Activated T-helper 1 cell treated with anti-CD3 and anti-CD28 coated beads, Interleukin-12 subunit alpha, Interleukin-12 subunit beta, Interleukin-2, Interleukin-4 antibody, amounts not matched to agents 30 ng/mL and 10 ng/mL and 1 ng/mL, durations not matched to agents 14 hours and 24 hours and 36 hours (primary cell): ENCODE measurements at regions of chr6 and their contacts with region 1.

Region 1: DNA sequence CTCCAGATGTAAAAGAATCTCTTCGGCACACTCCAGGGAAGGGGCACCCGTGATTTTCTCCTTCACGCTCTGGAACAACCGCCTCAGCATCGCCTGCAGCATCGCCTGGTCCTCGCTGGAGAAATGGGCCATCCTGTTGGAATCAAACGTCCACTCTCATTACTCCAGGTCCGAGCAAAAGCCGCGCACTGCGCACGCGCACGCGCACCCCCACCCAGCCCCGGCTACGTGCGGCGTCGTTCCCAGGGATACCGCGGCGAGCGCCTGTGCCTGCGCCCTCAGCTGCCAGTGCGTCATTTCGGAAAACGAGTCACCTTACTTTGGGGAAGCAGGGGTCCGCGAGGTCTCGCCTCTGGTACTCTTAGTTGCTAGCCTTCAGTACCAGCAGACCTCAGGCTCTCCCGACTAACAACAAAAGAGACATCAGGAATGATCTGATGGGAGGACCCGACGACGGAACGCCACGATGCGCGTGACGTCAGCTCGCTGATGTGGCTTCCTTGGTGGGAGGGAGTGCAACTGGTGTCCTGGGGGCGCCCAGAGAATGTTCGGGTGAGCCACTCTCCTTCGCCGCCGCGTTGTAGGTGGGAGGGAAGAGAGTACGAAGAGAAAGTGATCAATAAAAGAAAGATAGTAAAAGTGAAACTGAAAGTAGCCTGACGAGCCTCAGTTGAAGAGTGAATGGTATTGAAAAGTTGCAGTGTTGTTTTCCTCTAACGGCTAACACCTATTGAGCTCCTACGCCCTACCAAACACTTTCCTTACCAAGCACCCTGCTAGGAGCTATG is at the start of gene TBC1D32:
- DNase-seq: peak; percentile 83
- H3K4me3 Mint-ChIP-seq: peak within 1 kb of the TSS; percentile 95
- H3K27ac Mint-ChIP-seq: peak within 1 kb of the TSS; percentile 99
- H3K4me1 Mint-ChIP-seq: peaks cover 31% of the 10 kb centered on the region
- H3K27me3 Mint-ChIP-seq: peaks cover 3% of the 10 kb centered on the region
- total RNA-seq, gene TBC1D32: 6.8 and 7.9 TPM in 2 replicates

Region 2: DNA sequence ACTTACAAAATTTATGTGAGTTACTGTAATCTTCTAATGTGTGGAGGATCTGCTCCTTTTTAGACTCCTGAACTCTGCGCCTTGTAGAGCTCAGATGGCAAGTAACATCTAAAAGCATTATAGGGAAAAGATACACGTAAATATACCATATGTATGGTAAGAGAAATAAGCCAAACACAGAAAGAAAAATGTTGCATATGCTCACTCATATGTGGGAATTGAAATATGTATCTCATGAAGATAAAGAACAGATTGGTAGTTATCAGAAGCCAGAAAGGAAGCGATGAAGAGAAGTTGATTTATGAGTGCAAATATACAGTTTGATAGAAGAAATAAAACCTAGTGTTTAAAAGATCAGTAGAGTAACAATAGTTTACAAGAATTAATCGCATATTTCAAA is 1170.0 kb before region 1 on chr6:
- intact Hi-C with region 1: no loop called
- DNase-seq: no peak
- H3K4me3 Mint-ChIP-seq: no peak overlapping the region
- H3K27ac Mint-ChIP-seq: no peak overlapping the region
- H3K4me1 Mint-ChIP-seq: no peaks in the 10 kb centered on the region
- H3K27me3 Mint-ChIP-seq: no peaks in the 10 kb centered on the region

Region 3: GRCh38 chr6:121247386-121247785 is 87.1 kb before region 1 on chr6:
- intact Hi-C with region 1: loop called (anchors 1 kb)
- DNase-seq: no peak
- H3K4me3 Mint-ChIP-seq: no peak overlapping the region
- H3K27ac Mint-ChIP-seq: peak overlapping the region; percentile 21
- H3K4me1 Mint-ChIP-seq: peaks cover 15% of the 10 kb centered on the region
- H3K27me3 Mint-ChIP-seq: no peaks in the 10 kb centered on the region

Region 4: DNA sequence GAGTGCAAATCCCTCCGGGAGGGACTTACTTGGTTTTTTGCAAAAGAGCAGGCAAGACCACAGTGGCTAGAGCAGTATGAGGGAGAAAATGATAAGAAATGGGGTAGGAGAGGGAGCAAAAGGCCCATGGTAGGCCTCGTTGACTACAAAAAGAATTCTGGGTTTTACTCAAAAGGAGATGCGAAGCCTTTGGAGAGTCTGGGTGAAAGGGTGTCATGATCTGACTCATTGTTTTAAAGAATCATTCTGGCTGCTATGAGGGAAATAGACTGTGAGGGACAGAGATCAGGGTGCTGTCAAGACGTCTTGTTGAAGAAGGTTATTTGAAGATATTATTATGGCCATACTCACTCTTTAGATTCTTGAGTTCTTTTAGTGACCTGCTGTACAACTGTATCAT is 13.2 kb before region 1 on chr6:
- intact Hi-C with region 1: loop called (anchors 1 kb)
- DNase-seq: no peak
- H3K4me3 Mint-ChIP-seq: no peak overlapping the region
- H3K27ac Mint-ChIP-seq: no peak overlapping the region
- H3K4me1 Mint-ChIP-seq: no peaks in the 10 kb centered on the region
- H3K27me3 Mint-ChIP-seq: no peaks in the 10 kb centered on the region

Region 5: DNA sequence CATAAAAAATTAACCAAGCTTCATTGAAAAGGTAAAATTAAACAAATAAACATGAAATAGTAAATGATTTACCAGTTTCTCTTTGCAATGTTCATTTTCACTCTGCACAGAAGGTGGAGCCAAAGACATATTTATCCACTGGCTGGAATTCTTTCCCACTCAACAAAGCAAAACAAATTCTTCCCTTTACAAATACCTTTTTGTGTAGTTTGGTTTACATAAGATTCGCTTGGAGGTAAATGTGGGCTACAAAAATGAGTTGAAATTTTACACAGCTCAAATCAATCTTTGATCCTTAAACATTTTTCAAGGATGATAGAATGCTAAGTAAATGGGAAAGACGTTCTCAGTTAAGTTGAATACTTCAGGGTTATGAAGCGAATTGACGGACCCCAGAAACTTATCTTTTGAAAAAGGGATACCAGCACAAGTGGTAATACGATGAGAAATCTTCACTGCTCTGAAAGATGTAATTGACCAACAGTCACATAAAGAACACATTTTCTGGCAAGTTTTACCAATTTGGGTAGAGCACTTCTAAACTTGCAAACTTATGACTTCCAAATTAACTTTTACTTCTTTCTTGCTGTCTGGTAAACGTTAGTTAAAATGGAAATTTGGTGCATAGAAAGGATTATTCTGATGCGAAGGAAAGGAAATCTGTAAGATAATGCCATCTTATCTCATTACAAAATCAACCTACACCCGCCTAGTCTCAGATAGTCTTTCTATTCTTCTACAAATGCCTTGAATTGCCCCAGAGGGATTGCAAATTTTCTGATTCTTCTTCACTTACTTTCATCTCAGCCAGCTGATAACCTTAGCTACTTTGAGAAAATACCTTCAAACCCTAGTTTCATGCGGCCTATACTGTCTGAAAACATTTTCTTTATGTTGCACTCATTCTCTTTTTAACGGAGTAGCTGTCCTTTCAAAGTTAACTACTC is 96.3 kb after region 1 on chr6:
- intact Hi-C with region 1: no loop called
- DNase-seq: no peak
- H3K4me3 Mint-ChIP-seq: no peak overlapping the region
- H3K27ac Mint-ChIP-seq: no peak overlapping the region
- H3K4me1 Mint-ChIP-seq: no peaks in the 10 kb centered on the region
- H3K27me3 Mint-ChIP-seq: peaks cover 7% of the 10 kb centered on the region

Region 6: DNA sequence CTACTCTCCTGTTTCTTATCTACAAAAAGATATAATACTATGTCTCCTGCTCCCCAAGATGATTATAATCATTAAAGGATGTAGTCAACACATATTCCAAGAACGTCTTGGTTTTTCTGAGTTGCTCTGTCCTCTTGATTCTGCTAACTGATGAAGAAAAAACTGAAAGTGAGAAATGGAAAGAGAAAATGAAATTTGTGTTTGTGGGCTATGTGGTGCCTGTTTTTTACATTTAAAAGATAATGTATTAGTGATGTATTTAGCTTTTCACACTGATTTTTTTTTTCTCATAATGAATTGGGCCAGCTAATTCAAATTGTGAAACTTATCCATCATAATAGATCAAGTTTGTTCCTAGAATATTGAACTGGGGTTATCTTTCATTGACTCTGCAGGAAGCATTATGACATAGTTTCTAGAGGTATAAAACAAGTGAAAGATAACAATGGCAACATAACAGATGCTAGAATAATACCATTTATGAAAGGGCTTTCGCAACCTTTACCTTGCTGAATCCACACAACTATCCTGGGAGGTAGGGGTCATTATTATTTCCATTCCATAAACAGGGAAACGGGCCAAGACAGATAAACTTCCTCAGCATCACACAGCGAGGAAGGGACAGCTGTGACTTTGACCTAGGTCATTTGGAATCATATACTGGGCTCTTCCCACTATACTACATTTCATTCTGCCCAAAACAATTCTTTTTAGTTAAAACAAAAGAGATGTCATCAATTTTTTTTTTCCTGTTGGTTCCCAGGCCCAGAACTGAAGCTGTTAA is 437.6 kb after region 1 on chr6:
- intact Hi-C with region 1: loop called (anchors 1 kb)
- DNase-seq: no peak
- H3K4me3 Mint-ChIP-seq: peak overlapping the region; percentile 25
- H3K27ac Mint-ChIP-seq: peak overlapping the region; percentile 81
- H3K4me1 Mint-ChIP-seq: peaks cover 39% of the 10 kb centered on the region
- H3K27me3 Mint-ChIP-seq: peaks cover 2% of the 10 kb centered on the region

Region 7: GRCh38 chr6:122207794-122208193 is 873.3 kb after region 1 on chr6:
- intact Hi-C with region 1: no loop called
- DNase-seq: no peak
- H3K4me3 Mint-ChIP-seq: no peak overlapping the region
- H3K27ac Mint-ChIP-seq: no peak overlapping the region
- H3K4me1 Mint-ChIP-seq: no peaks in the 10 kb centered on the region
- H3K27me3 Mint-ChIP-seq: no peaks in the 10 kb centered on the region

Region 8: DNA sequence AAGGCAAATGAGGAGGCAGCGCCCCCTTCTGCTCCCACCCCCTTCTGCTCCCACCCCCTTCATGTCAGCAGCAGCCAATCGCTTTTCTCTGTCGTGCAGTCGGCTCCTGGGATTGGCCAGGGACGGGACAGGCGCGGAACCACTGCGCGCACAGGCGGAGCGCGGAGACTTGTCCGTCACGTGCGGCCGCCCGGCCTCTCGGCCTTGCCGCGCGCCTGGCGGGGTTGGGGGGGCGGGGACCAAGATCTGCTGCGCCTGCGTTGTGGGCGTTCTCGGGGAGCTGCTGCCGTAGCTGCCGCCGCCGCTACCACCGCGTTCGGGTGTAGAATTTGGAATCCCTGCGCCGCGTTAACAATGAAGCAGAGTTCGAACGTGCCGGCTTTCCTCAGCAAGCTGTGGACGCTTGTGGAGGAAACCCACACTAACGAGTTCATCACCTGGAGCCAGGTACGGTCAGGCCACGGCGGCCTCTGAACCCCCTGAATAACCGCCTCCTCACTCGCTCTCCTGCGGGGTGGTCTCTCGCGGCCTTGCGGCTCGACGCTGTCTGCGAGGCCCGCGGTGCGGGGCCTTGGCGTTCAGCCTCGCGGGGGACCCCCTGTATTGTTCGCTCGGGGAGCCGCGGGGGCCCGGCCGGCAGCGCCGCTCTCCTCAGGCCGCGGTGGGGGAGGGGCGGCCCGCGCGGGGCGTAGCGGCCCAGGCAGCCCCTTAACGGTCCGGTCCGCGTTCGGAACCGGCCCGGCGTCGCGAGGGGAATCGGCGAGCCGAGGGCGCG is 1065.1 kb after region 1 on chr6 and contains the start of gene HSF2:
- intact Hi-C with region 1: loop called (anchors 1 kb)
- DNase-seq: peak; percentile 91
- H3K4me3 Mint-ChIP-seq: peak within 1 kb of the TSS; percentile 98
- H3K27ac Mint-ChIP-seq: peak within 1 kb of the TSS; percentile 98
- H3K4me1 Mint-ChIP-seq: peaks cover 41% of the 10 kb centered on the region
- H3K27me3 Mint-ChIP-seq: no peaks in the 10 kb centered on the region
- total RNA-seq, gene HSF2: 14.7 and 15.3 TPM in 2 replicates